ENCODE measurements at regions of chr3 and their contacts with region 1.

Region 1: GRCh38 chr3:150546226-150547044 is at the starts of genes EIF2A and SERP1:
- DNase-seq: peak; percentile 98
- ATAC-seq: peak; percentile 92
- H3K4me3 Mint-ChIP-seq: peak within 1 kb of the TSS; percentile 96
- H3K27ac Mint-ChIP-seq: peak within 1 kb of the TSS; percentile 99
- H3K4me1 Mint-ChIP-seq: peaks cover 50% of the 10 kb centered on the region
- H3K27me3 Mint-ChIP-seq: no peaks in the 10 kb centered on the region
- CTCF ChIP-seq: no peak
- total RNA-seq, gene EIF2A: 105 and 109 TPM in 2 replicates
- total RNA-seq, gene SERP1: 87.2 and 88.2 TPM in 2 replicates

Region 2: GRCh38 chr3:149752051-149752787 is 794.2 kb before region 1 on chr3 and contains the start of gene COMMD2:
- CTCF ChIA-PET with region 1: no interaction called
- POLR2A ChIA-PET with region 1: no interaction called
- intact Hi-C with region 1: loop called (anchors 2 kb)
- DNase-seq: peak; percentile 68
- ATAC-seq: peak; percentile 99
- H3K4me3 Mint-ChIP-seq: peak within 1 kb of the TSS; percentile 98
- H3K27ac Mint-ChIP-seq: peak within 1 kb of the TSS; percentile 92
- H3K4me1 Mint-ChIP-seq: peaks cover 30% of the 10 kb centered on the region
- H3K27me3 Mint-ChIP-seq: peaks cover 7% of the 10 kb centered on the region
- CTCF ChIP-seq: no peak
- total RNA-seq, gene COMMD2: 41.5 and 45.6 TPM in 2 replicates

Region 3: DNA sequence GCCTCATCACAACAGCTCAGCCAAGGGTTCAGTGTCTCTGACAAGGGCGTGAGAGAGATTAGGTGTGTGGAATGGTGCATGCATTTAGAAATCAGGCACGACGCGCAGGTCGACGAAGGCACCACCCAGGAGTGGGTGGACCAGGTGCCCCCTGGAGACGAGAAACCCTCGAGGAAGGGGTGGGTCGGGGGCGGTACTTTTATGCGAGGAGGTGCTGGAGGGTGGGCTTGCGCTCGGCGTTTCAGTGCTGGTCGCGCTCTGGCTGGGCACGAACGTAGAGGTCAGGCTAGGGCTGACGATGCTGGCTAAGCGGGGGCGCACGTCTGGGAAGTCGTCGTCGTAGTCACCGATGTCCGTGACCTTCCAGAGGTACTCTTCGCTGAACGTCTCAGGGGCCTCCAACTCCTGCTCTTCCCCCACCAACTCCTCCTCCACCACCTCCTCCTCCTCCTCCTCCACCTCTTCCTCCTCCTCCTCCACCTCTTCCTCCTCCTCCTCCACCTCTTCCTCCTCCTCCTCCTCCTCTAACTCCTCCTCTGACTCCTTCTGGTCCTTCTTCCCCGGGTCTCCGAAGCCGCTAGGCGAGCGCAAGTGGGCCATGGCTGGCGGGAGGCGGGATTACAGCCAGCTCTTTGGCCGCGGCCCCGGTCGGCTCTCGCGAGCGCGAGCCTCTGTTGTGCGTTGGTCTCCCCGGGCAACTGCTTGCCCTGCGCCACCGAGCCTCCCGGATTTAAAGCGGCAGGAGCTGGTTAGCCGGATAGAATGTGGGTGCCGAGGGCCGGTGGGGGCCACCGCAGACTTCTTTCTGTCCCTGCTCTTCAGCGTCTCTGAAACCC is 157.1 kb after region 1 on chr3 and contains the start of gene ERICH6:
- CTCF ChIA-PET with region 1: interaction called, 3 read pairs
- POLR2A ChIA-PET with region 1: interaction called, 22 read pairs
- intact Hi-C with region 1: loop called (anchors 1 kb)
- DNase-seq: peak; percentile 86
- ATAC-seq: peak; percentile 93
- H3K4me3 Mint-ChIP-seq: peak within 1 kb of the TSS; percentile 97
- H3K27ac Mint-ChIP-seq: peak within 1 kb of the TSS; percentile 98
- H3K4me1 Mint-ChIP-seq: peaks cover 19% of the 10 kb centered on the region
- H3K27me3 Mint-ChIP-seq: no peaks in the 10 kb centered on the region
- CTCF ChIP-seq: no peak
- total RNA-seq, gene ERICH6: not detected in 2 replicates

Region 4: DNA sequence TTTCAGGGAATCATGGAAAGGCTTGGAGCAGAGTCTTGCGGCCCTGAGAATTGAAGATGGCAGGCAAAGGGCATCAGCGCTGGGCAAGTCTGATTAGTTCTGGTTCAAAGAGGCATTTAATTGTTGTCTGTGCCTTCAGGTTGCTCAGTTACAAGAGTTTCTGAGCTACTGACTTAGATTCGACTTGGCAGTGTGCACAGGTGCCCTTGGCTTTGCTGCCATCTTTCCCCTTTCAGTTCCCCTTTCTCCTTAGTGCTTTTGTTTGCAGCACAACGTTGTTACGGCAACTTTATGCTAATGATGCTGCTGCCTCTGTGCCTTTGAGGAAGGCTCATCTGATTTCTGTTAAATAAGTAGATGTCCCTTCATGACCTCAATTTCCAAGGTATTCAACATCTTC is 719.4 kb after region 1 on chr3:
- CTCF ChIA-PET with region 1: no interaction called
- POLR2A ChIA-PET with region 1: interaction called, 4 read pairs
- intact Hi-C with region 1: loop called (anchors 1 kb)
- DNase-seq: peak; percentile 44
- ATAC-seq: peak; percentile 87
- H3K4me3 Mint-ChIP-seq: peak overlapping the region; percentile 60
- H3K27ac Mint-ChIP-seq: peak overlapping the region; percentile 98
- H3K4me1 Mint-ChIP-seq: peaks cover 66% of the 10 kb centered on the region
- H3K27me3 Mint-ChIP-seq: no peaks in the 10 kb centered on the region
- CTCF ChIP-seq: no peak

Region 5: DNA sequence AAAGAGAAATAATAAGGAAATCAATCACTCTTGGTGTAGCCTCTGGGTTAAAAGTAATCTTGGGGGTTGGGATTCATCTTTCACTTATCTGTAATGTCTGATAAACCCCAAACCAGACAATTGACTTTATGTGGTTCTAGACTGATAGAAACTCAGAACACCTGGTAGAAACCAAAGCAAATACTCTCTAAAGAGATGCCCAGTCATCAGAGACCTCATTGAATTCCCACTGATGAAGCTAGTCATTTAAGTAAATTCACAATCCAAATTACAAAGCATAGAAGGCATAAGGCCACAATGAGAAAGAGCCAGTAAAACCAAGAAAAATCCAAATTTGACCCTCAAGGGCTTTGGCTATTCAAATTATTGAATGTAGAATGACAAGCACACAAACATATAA is 1972.9 kb after region 1 on chr3:
- CTCF ChIA-PET with region 1: no interaction called
- POLR2A ChIA-PET with region 1: no interaction called
- intact Hi-C with region 1: loop called (anchors 5 kb)
- DNase-seq: no peak
- ATAC-seq: no peak
- H3K4me3 Mint-ChIP-seq: no peak overlapping the region
- H3K27ac Mint-ChIP-seq: peak overlapping the region; percentile 76
- H3K4me1 Mint-ChIP-seq: peaks cover 79% of the 10 kb centered on the region
- H3K27me3 Mint-ChIP-seq: no peaks in the 10 kb centered on the region
- CTCF ChIP-seq: no peak